Psoas muscle (tissue), 8 donors: ENCODE measurements at regions of chr2 and their contacts with region 1.

Region 1: GRCh38 chr2:217510771-217511291 is 492.0 kb downstream of the TNS1 start:
- DNase-seq: peak in 1 of 2 donors; percentile 22
- ATAC-seq: peak; percentile 89 to 98 (median 94)
- H3K4me3 ChIP-seq: peak overlapping the region; percentile 30
- H3K27ac ChIP-seq: no peak overlapping the region
- H3K4me1 ChIP-seq: no peaks in the 10 kb centered on the region
- H3K27me3 ChIP-seq: no peaks in the 10 kb centered on the region
- CTCF ChIP-seq: peak; percentile 73

Region 2: DNA sequence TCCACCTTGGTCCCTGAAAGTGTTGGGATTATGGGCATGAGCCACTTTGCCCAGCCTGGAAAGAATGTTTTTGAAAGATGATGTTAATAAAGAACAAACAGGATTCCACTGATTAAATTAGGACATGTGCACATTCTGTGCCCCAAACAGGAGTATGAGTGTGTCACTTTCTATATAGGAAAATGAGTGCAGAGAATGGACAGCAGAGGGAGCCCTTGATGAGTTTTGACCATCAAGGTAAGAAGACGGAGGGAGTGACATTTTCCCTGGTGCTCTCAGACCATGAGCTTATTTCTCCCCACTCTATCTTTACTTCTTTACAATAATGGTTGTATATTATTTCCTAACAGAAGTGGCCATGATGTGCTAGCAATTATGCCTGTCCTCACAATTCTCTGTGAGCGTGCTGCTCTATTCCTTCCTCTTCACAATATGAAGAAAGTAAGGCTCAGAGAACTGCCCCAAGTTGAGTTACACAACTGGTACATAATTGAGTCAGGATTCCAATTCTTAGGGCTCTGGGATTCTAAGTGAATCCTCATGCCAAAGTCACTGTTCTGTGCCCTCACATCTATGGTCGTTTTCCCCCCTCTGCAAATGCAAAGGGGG is 991.6 kb before region 1 on chr2:
- intact Hi-C with region 1: loop called in 1 of 2 experiments (anchors 5 kb)
- DNase-seq: no peak
- ATAC-seq: peak; percentile 87 to 95 (median 90)
- H3K4me3 ChIP-seq: no peak overlapping the region
- H3K27ac ChIP-seq: no peak overlapping the region
- H3K4me1 ChIP-seq: no peaks in the 10 kb centered on the region
- H3K27me3 ChIP-seq: no peaks in the 10 kb centered on the region
- CTCF ChIP-seq: peak; percentile 82

Region 3: DNA sequence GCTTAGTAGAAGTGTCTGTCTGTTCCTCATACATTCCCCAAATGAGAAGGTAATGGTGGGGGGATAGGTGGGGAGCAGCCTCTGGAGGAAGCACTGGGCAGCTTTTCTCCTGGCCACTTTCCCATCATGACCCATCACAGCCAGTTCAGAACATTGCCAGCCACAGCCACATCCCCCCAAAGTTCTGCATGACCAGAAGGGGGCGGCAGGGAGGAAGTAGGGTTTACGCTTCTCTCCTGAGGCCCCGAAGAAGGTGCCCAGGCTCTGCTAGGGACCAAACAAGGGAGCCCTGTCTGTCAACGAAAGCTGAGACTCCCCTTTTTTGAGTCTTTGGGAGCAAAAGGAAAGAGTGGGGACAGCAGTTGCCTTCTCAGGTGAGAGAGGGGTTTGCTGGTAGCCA is 823.2 kb before region 1 on chr2:
- intact Hi-C with region 1: loop called (anchors 5 kb)
- DNase-seq: no peak
- ATAC-seq: no peak
- H3K4me3 ChIP-seq: no peak overlapping the region
- H3K27ac ChIP-seq: peak overlapping the region; percentile 89
- H3K4me1 ChIP-seq: peaks cover 83% of the 10 kb centered on the region
- H3K27me3 ChIP-seq: no peaks in the 10 kb centered on the region
- CTCF ChIP-seq: peak; percentile 16

Region 4: DNA sequence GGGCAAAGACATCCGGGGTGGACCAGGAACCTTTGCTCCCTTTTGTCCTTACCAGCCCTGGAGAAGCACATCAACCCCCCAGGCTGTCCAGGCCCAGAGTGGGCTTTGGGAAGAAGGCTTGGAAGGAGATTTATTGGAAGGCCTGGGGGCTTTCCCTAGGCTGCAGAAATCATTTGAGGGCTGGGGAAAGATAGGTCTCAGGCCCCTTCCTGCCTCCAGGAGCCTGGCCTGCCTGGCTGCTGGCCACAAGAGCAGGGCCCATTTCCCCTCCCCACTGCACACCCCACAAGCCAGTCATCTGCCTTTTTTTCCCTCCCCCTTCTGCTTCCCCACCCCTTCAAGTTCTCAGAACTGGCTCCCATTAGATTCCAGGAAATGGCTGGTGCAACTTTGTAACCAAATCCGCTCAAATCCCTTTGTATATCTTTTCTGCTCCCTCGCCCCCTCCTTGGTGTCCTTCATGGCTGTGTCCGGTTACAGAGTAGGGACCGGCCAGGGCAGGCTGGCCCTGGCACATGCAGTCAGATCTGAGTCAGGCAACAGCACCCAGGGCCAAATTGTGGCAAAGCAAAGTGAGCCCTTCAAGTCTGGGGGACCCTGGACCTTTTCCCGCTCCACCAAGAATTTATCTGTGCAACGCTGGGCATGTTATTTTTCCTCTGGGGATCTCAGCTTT is 630.2 kb before region 1 on chr2:
- intact Hi-C with region 1: loop called in 1 of 2 experiments (anchors 10 kb)
- DNase-seq: peak; percentile 72 to 90
- ATAC-seq: peak; percentile 87 to 91 (median 88)
- H3K4me3 ChIP-seq: no peak overlapping the region
- H3K27ac ChIP-seq: peak overlapping the region; percentile 90
- H3K4me1 ChIP-seq: peaks cover 75% of the 10 kb centered on the region
- H3K27me3 ChIP-seq: no peaks in the 10 kb centered on the region
- CTCF ChIP-seq: no peak

Region 5: DNA sequence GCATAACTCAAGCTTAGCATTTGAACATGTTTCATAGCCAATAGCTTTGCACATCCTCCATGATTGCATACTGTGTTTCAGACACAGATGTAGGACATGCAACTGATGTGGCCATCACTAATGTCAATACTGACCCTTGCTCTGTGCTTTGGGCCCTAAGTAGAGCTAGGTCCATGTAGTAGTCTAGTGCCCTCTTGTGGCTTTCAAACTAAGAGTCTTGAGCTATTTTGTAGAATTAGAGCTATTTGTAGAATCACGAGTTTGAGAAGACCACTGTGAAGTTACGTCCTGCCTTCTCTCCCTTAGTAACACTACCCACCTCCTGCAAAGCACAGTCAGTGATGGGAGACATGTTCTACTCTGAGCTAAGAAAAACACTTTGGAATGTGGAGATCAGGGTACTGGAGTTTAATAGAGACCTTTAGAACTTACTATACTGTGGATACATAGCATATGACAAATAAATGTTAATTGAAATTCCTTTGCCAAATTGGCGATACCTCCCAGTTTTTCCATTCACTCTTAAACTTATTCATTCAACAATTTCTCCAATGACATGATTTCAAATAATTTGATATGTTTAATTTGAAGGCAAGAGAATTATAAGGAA is 344.5 kb before region 1 on chr2:
- intact Hi-C with region 1: loop called in 1 of 2 experiments (anchors 5 kb)
- DNase-seq: no peak
- ATAC-seq: peak; percentile 48 to 76 (median 69)
- H3K4me3 ChIP-seq: no peak overlapping the region
- H3K27ac ChIP-seq: no peak overlapping the region
- H3K4me1 ChIP-seq: peaks cover 19% of the 10 kb centered on the region
- H3K27me3 ChIP-seq: no peaks in the 10 kb centered on the region
- CTCF ChIP-seq: peak; percentile 70

Region 6: DNA sequence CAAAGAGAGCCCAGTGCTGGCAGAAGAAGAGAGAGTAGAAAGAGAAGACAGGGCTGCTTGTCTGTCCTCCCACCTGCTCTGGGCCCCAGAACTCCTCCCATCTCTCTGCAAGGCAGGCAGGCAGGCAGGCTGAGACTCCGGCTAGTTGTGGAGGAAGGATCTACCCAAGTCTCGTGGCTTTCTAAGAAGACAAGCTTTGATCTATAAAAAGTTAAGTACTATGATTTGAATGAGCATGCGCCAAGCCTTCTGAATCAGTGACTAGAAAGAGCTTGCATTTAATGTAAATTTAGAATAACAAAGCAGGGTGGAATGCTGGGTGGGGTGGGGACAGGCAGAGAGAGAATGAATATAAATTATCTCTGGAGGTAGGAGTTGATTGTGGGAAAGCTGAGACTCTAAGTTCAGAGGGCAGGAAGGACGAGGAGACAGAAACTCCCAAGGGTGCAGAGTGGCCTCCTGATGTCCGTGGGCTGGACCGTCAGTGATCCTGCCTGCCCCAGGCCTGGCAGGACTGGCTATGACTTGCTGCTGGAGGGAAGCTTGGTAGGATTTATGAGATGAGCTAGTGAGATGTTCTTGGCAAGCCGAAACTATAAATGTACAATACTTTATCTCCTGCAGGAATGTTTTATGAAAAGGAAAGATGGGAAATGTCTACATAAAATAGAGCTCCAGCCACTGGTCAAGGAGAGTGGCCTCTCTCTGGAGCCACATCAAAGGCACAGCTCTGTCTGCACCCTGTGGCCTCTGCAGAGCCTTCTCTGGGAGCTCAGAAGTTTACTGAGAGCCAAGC is 44.4 kb after region 1 on chr2:
- intact Hi-C with region 1: no loop called
- DNase-seq: peak in 1 of 2 donors; percentile 14
- ATAC-seq: no peak
- H3K4me3 ChIP-seq: no peak overlapping the region
- H3K27ac ChIP-seq: no peak overlapping the region
- H3K4me1 ChIP-seq: peaks cover 10% of the 10 kb centered on the region
- H3K27me3 ChIP-seq: no peaks in the 10 kb centered on the region
- CTCF ChIP-seq: no peak

Region 7: DNA sequence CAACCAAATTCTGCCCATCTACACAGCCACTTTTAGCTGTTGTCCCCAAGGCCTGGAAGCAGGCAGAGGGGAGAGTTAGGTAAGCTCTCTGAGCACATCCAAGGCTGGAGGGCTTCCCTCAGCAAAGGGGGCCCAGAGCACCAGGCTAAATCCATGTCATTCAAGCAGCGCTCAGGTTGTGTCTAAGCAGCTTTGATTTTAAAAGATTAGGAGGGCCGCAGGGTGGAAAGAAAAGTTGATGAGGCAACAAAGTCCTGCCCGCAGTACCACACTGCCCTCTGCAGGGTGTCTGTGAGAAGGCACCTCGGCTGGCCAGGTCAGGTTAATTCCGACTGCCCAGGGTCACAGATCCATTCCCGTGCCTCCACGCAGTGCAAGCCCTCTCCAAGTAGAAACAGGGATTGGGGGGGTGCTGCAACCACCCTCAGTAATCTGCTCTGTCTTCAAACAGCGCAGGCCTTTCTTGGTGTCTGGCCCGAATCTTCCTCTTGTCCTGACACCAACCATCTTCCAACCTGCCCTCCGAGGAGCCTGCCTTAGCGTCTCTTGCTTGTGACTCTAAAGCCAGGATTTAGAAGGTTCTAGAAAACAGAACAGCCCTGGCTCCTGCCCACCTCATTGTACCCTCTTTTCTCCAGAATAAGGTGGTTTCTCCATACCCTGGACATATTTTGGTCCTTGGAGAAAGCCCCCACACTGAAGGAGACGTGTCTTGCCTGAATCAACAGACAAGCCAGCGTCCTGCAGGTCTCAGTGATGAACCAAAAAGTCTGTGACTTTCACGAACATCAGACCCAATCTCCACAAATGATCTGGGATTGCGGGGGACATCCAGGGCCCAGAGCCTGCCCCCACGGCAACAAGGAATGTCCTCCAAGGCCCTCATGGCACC is 202.8 kb after region 1 on chr2:
- intact Hi-C with region 1: loop called in 1 of 2 experiments (anchors 5 kb)
- DNase-seq: peak; percentile 74 to 88
- ATAC-seq: peak; percentile 89 to 96 (median 91)
- H3K4me3 ChIP-seq: no peak overlapping the region
- H3K27ac ChIP-seq: peak overlapping the region; percentile 2
- H3K4me1 ChIP-seq: peaks cover 17% of the 10 kb centered on the region
- H3K27me3 ChIP-seq: no peaks in the 10 kb centered on the region
- CTCF ChIP-seq: peak; percentile 98